Right ventricle myocardium inferior (tissue), 1 donor: ENCODE measurements at regions of chr7 and their contacts with region 1.

Region 1: GRCh38 chr7:90424720-90425119 is 21.5 kb downstream of the CLDN12 start:
- DNase-seq: no peak
- ATAC-seq: no peak

Region 2: DNA sequence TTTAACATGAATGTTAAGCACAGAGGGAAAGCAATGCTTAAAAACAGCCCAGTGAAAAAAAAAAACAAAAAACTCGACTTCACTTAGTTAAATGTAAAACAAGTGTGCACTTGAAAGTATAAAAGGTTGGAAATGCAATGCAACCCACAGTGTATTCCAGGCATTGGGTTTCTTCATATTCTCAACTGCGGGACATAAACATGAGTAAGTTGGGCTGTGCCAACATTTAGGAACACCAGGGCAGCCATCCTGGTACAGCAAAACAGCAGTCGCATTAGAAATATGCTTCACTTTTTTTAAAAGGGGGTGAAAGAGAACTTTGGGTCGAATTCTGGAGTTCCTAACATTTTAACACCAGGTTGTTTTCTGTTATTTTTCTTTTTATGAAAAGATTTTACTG is 269.5 kb before region 1 on chr7:
- intact Hi-C with region 1: loop called (anchors 2 kb)
- DNase-seq: no peak
- ATAC-seq: no peak

Region 3: GRCh38 chr7:90262438-90262837 is 162.3 kb before region 1 on chr7:
- intact Hi-C with region 1: loop called (anchors 5 kb)
- DNase-seq: no peak
- ATAC-seq: no peak

Region 4: GRCh38 chr7:90313908-90314307 is 110.8 kb before region 1 on chr7:
- intact Hi-C with region 1: loop called (anchors 2 kb)
- DNase-seq: no peak
- ATAC-seq: no peak

Region 5: GRCh38 chr7:90346336-90347125 is 78.2 kb before region 1 on chr7 and contains the start of gene GTPBP10:
- intact Hi-C with region 1: loop called (anchors 5 kb)
- DNase-seq: peak; percentile 95
- ATAC-seq: peak; percentile 100
- total RNA-seq, gene GTPBP10: 24.8 TPM